Activated CD4-positive, alpha-beta T cell treated with anti-CD3 and anti-CD28 coated beads, Interleukin-2, amount 10 ng/mL, durations not matched to agents 24 days and 14 days (primary cell): ENCODE measurements at regions of chr3 and their contacts with region 1.

Region 1: GRCh38 chr3:196711838-196712513 is at the starts of genes CEP19 and PIGX:
- DNase-seq: peak; percentile 97
- H3K4me3 Mint-ChIP-seq: peak within 1 kb of the TSS; percentile 88
- H3K27ac Mint-ChIP-seq: peak within 1 kb of the TSS; percentile 97
- H3K4me1 Mint-ChIP-seq: peaks cover 32% of the 10 kb centered on the region
- H3K27me3 Mint-ChIP-seq: no peaks in the 10 kb centered on the region
- total RNA-seq, gene CEP19: 3.9 and 4.0 TPM in 2 replicates
- total RNA-seq, gene PIGX: 54.3 and 54.5 TPM in 2 replicates

Region 2: GRCh38 chr3:196632046-196632751 is 79.8 kb before region 1 on chr3:
- intact Hi-C with region 1: loop called (anchors 2 kb)
- DNase-seq: peak; percentile 97
- H3K4me3 Mint-ChIP-seq: peak overlapping the region; percentile 92
- H3K27ac Mint-ChIP-seq: peak overlapping the region; percentile 97
- H3K4me1 Mint-ChIP-seq: peaks cover 52% of the 10 kb centered on the region
- H3K27me3 Mint-ChIP-seq: no peaks in the 10 kb centered on the region

Region 3: GRCh38 chr3:196694202-196694638 is 17.8 kb before region 1 on chr3:
- intact Hi-C with region 1: loop called (anchors 2 kb)
- DNase-seq: peak; percentile 63
- H3K4me3 Mint-ChIP-seq: no peak overlapping the region
- H3K27ac Mint-ChIP-seq: peak overlapping the region; percentile 89
- H3K4me1 Mint-ChIP-seq: peaks cover 17% of the 10 kb centered on the region
- H3K27me3 Mint-ChIP-seq: peaks cover 5% of the 10 kb centered on the region

Region 4: GRCh38 chr3:196739671-196740480 is 27.9 kb after region 1 on chr3 and contains the start of gene PAK2:
- intact Hi-C with region 1: loop called (anchors 1 kb)
- DNase-seq: peak; percentile 97
- H3K4me3 Mint-ChIP-seq: peak within 1 kb of the TSS; percentile 96
- H3K27ac Mint-ChIP-seq: peak within 1 kb of the TSS; percentile 98
- H3K4me1 Mint-ChIP-seq: peaks cover 22% of the 10 kb centered on the region
- H3K27me3 Mint-ChIP-seq: no peaks in the 10 kb centered on the region
- total RNA-seq, gene PAK2: 81.1 and 92.5 TPM in 2 replicates

Region 5: DNA sequence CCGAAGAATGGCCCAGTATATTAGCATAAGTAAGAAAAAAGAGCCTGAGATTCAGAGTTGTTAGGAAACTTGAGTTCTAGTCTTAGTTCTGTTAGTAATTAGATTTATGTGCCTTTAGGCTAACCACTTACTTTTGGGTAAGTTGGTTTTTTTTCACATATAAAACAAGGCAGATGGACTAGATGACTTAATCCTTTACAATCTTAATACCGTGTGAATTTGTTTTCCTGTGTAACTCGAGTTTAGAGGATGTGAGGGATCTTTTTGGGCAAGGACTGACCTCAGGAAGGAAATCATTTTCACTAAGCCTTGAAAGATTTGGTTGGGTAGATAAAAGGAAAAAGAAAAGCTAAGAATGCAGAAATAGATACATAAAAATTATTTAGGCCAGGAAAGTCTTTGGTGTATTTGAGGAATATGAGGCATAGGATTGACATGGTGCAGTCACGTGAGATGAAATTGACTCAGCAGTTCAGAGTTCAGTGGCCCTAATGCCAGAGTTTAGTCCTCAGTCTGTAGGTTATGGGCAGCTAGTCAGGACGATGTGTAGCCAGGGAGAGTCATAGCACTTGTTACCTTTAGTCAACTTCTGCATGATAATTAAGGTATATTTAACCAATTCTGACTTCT is 62.3 kb after region 1 on chr3:
- intact Hi-C with region 1: no loop called
- DNase-seq: no peak
- H3K4me3 Mint-ChIP-seq: no peak overlapping the region
- H3K27ac Mint-ChIP-seq: peak overlapping the region; percentile 27
- H3K4me1 Mint-ChIP-seq: peaks cover 26% of the 10 kb centered on the region
- H3K27me3 Mint-ChIP-seq: no peaks in the 10 kb centered on the region

Region 6: GRCh38 chr3:196942226-196942914 is 230.4 kb after region 1 on chr3 and contains the start of gene NCBP2:
- intact Hi-C with region 1: loop called (anchors 1 kb)
- DNase-seq: peak; percentile 100
- H3K4me3 Mint-ChIP-seq: peak within 1 kb of the TSS; percentile 89
- H3K27ac Mint-ChIP-seq: peak within 1 kb of the TSS; percentile 95
- H3K4me1 Mint-ChIP-seq: peaks cover 41% of the 10 kb centered on the region
- H3K27me3 Mint-ChIP-seq: peaks cover 2% of the 10 kb centered on the region
- total RNA-seq, gene NCBP2: 101 and 105 TPM in 2 replicates